ENCODE measurements at regions of chr18 and their contacts with region 1.

Region 1: DNA sequence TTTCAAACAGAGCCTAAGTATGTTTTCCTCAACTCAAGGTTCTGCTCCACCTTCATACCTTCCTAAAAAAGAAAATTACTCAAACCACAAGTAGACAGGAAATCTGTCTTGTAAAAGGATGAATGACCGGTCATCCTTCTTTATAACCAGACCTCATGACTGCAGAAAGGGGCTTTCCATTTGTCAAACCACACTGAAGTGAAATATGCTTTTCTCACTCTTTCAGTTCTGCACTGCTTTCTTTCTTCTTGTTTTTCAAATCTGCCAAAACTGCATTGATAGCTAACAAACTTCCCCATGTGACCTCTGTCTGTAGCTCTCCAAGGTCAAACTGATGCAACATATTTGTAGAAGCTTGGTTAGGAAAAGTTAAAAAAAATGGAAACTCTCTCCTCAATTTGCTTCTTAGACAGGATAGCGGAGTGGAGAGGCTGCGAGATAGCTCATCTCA is 308.9 kb upstream of the CCDC68 start:
- DNase-seq: no peak
- H3K4me3 ChIP-seq: no peak overlapping the region
- H3K27ac ChIP-seq: no peak overlapping the region
- H3K27me3 ChIP-seq: no peaks in the 10 kb centered on the region
- CTCF ChIP-seq: no peak

Region 2: DNA sequence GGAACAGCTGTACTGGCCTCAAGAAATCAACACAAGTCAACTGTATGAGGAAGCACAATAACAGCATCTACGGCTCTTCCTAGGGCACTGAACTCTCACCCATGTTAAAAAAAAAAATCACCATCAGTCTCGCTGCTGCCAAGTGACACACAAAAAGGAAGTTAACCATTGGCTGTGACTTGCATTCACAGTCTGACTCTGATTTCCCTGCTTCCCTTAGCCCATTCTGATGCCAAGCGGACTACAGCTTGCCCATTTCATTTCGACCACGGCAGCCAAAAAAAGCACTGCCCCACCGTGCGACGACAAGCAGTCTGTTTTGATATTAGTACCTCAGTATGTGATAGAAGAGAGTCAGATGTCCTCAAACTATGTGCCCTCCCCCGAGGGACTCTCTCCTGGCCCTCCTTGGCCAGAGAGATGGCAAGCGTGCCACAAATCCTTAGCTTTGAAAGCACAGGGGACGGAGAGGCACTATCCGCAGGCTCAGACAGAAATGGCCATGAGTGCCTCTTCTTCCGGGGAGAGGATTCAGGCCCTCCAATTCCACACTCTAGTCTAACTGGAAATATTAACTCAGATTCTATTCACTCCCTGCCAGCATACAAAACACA is 69.8 kb after region 1 on chr18:
- CTCF ChIA-PET with region 1: no interaction called
- POLR2A ChIA-PET with region 1: no interaction called
- DNase-seq: no peak
- H3K4me3 ChIP-seq: no peak overlapping the region
- H3K27ac ChIP-seq: no peak overlapping the region
- H3K27me3 ChIP-seq: no peaks in the 10 kb centered on the region
- CTCF ChIP-seq: no peak

Region 3: GRCh38 chr18:55387139-55387984 is 119.2 kb after region 1 on chr18:
- CTCF ChIA-PET with region 1: interaction called, 10 read pairs
- POLR2A ChIA-PET with region 1: no interaction called
- DNase-seq: no peak
- H3K4me3 ChIP-seq: no peak overlapping the region
- H3K27ac ChIP-seq: no peak overlapping the region
- H3K27me3 ChIP-seq: no peaks in the 10 kb centered on the region
- CTCF ChIP-seq: no peak

Measured in AG04450 (cell line).